ENCODE measurements at regions of chr6 and their contacts with region 1.

Region 1: DNA sequence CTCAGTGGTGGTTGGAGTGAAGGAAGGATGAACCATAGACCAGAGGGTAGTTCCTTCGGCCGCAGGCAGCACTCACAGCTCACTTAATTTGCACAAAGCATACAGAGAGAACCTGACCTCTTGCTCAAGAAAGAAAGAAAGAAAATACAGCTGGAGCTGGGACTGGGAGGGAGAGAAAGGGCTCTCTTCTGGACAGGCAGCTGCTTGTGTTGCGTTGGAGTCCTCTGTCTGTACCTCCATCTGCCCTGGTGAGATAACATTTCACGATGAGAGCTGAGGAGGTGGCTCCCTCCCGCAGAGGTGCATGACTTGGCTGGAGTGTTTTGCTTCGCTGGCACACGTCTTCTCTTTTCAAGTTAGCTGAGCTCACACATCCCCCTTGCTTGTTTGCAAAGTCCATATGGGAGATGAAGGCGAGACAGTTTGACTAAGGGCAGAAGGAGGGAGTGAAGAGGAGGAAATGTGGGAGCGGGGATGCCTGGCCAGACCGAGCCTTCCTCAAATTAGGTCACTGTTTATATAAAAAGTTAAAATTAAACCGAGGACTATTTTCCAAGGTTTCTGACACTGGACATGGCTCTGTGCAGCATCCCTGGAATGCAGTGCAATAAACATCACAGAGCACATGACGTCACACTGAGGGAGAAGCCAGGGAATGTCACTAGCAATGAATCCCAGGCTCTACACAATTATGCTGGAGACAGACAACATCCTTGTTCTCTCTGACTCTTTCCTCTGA is 359.4 kb downstream of the CD83 start:
- DNase-seq: peak; percentile 100
- ATAC-seq: peak; percentile 93
- H3K4me3 ChIP-seq: peak overlapping the region; percentile 1; the same call in 1 of the 2 replicates
- H3K27ac ChIP-seq: peak overlapping the region; percentile 57
- H3K4me1 ChIP-seq: peaks cover 22% of the 10 kb centered on the region
- H3K27me3 ChIP-seq: no peaks in the 10 kb centered on the region
- CTCF ChIP-seq: no peak
- POLR2A ChIP-seq: peak; percentile 75
- RAD21 ChIP-seq: peak; percentile 12

Region 2: DNA sequence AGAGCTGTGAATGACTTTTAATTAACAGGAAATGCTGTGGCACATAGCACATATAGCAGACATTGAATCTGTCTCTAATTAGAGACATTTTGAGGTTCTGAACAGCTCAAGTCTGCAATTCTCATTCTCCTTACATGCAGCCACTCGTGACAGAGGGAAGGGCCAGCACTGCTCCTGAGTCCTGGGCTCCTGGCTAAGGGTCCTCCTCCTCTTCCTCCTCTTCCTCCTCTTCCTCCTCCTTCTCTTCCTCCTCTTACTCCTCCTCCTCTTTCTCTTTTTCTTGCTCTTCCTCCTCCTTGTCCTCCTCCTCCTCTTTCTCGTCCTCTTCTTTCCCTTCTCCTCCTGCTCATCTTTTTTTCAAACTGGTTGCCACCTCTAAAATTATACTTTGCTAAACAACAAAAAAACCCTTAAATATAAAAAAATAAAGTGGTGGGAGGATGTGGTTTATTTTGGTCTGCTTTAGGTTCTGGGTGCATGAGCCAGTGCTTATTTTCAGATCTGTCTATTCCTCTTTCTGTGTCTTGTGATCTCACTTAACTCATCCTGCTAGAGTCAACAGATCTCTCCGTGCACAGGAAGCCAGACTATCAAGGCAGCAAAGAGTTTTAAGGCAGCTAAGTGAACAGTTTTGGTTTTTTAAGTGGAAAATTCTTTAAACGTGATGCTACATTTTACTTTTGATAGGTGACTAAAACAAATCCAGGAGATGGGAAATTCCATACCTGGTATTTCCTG is 200.1 kb before region 1 on chr6:
- CTCF ChIA-PET with region 1: no interaction called
- POLR2A ChIA-PET with region 1: no interaction called
- dilution Hi-C with region 1: no loop called
- in situ Hi-C with region 1: no loop called
- intact Hi-C with region 1: no loop called
- DNase-seq: peak; percentile 63
- ATAC-seq: no peak
- H3K4me3 ChIP-seq: no peak overlapping the region
- H3K27ac ChIP-seq: no peak overlapping the region
- H3K4me1 ChIP-seq: no peaks in the 10 kb centered on the region
- H3K27me3 ChIP-seq: peaks cover 4% of the 10 kb centered on the region; the same call in 1 of the 2 replicates
- CTCF ChIP-seq: no peak
- POLR2A ChIP-seq: no peak
- RAD21 ChIP-seq: no peak

Region 3: GRCh38 chr6:14458669-14459266 is 18.2 kb before region 1 on chr6:
- CTCF ChIA-PET with region 1: no interaction called
- POLR2A ChIA-PET with region 1: no interaction called
- dilution Hi-C with region 1: no loop called
- in situ Hi-C with region 1: no loop called
- intact Hi-C with region 1: loop called (anchors 1 kb)
- DNase-seq: peak; percentile 97
- ATAC-seq: peak; percentile 92
- H3K4me3 ChIP-seq: no peak overlapping the region
- H3K27ac ChIP-seq: no peak overlapping the region
- H3K4me1 ChIP-seq: peaks cover 6% of the 10 kb centered on the region
- H3K27me3 ChIP-seq: no peaks in the 10 kb centered on the region
- CTCF ChIP-seq: no peak
- POLR2A ChIP-seq: no peak
- RAD21 ChIP-seq: no peak

Region 4: GRCh38 chr6:14665827-14666724 is 189.1 kb after region 1 on chr6:
- CTCF ChIA-PET with region 1: no interaction called
- POLR2A ChIA-PET with region 1: no interaction called
- dilution Hi-C with region 1: no loop called
- in situ Hi-C with region 1: no loop called
- intact Hi-C with region 1: loop called (anchors 10 kb)
- DNase-seq: peak; percentile 100
- ATAC-seq: peak; percentile 96
- H3K4me3 ChIP-seq: no peak overlapping the region
- H3K27ac ChIP-seq: 0 out of 2 replicates have a peak overlapping the region, but pooled peaks have one; percentile 3
- H3K4me1 ChIP-seq: peaks cover 16% of the 10 kb centered on the region
- H3K27me3 ChIP-seq: peaks cover 2% of the 10 kb centered on the region; the same call in 1 of the 2 replicates
- CTCF ChIP-seq: no peak
- POLR2A ChIP-seq: peak; percentile 92
- RAD21 ChIP-seq: peak; percentile 36